ENCODE measurements at regions of chr1 and their contacts with region 1.

Region 1: GRCh38 chr1:26695356-26696118 is at the start of gene ARID1A:
- DNase-seq: peak; percentile 94 to 98 (median 98)
- ATAC-seq: peak; percentile 81
- H3K4me3 ChIP-seq: peak within 1 kb of the TSS; percentile 81
- H3K4me3 Mint-ChIP-seq: peak within 1 kb of the TSS in 9 of 10 donors; percentile 94 to 97 (median 94)
- H3K27ac ChIP-seq: peak within 1 kb of the TSS; percentile 83
- H3K27ac Mint-ChIP-seq: peak within 1 kb of the TSS; percentile 93 to 98 (median 95)
- H3K4me1 ChIP-seq: peaks cover 36 to 39% of the 10 kb centered on the region in 2 donors
- H3K4me1 Mint-ChIP-seq: peaks cover 14 to 35% (median 31%) of the 10 kb centered on the region in 7 donors
- H3K27me3 ChIP-seq: no peaks in the 10 kb centered on the region
- H3K27me3 Mint-ChIP-seq: no peaks in the 10 kb centered on the region
- total RNA-seq, gene ARID1A: 118 to 148 (median 131) TPM

Region 2: GRCh38 chr1:26254404-26254803 is 441.1 kb before region 1 on chr1:
- CTCF ChIA-PET with region 1: no interaction called
- POLR2A ChIA-PET with region 1: no interaction called
- intact Hi-C with region 1: no loop called
- DNase-seq: no peak
- ATAC-seq: no peak
- H3K4me3 ChIP-seq: no peak overlapping the region
- H3K4me3 Mint-ChIP-seq: no peak overlapping the region
- H3K27ac ChIP-seq: no peak overlapping the region
- H3K27ac Mint-ChIP-seq: no peak overlapping the region
- H3K4me1 ChIP-seq: no peaks in the 10 kb centered on the region
- H3K4me1 Mint-ChIP-seq: peaks cover 0 to 10% (median 0%) of the 10 kb centered on the region in 7 donors
- H3K27me3 ChIP-seq: no peaks in the 10 kb centered on the region
- H3K27me3 Mint-ChIP-seq: no peaks in the 10 kb centered on the region

Region 3: GRCh38 chr1:26279456-26280332 is 415.8 kb before region 1 on chr1 and contains the start of gene SH3BGRL3:
- CTCF ChIA-PET with region 1: no interaction called
- POLR2A ChIA-PET with region 1: no interaction called
- intact Hi-C with region 1: loop called in 1 of 2 experiments (anchors 10 kb)
- DNase-seq: peak; percentile 73 to 89 (median 84)
- ATAC-seq: peak; percentile 77
- H3K4me3 ChIP-seq: peak within 1 kb of the TSS; percentile 58
- H3K4me3 Mint-ChIP-seq: peak within 1 kb of the TSS; percentile 80 to 98 (median 89)
- H3K27ac ChIP-seq: peak within 1 kb of the TSS; percentile 86
- H3K27ac Mint-ChIP-seq: peak within 1 kb of the TSS; percentile 83 to 99 (median 93)
- H3K4me1 ChIP-seq: peaks cover 80 to 82% of the 10 kb centered on the region in 2 donors
- H3K4me1 Mint-ChIP-seq: peaks cover 60 to 85% (median 71%) of the 10 kb centered on the region in 7 donors
- H3K27me3 ChIP-seq: no peaks in the 10 kb centered on the region
- H3K27me3 Mint-ChIP-seq: no peaks in the 10 kb centered on the region
- total RNA-seq, gene SH3BGRL3: 156 to 636 (median 224) TPM

Region 4: GRCh38 chr1:26602378-26602959 is 93.1 kb before region 1 on chr1:
- CTCF ChIA-PET with region 1: interaction called, 14 read pairs
- POLR2A ChIA-PET with region 1: interaction called, 14 read pairs
- intact Hi-C with region 1: loop called (anchors 1 to 5 kb)
- DNase-seq: peak in 7 of 9 donors; percentile 43 to 73 (median 65)
- ATAC-seq: peak; percentile 71
- H3K4me3 ChIP-seq: no peak overlapping the region
- H3K4me3 Mint-ChIP-seq: peak overlapping the region in 1 of 10 donors; percentile 41
- H3K27ac ChIP-seq: no peak overlapping the region
- H3K27ac Mint-ChIP-seq: peak overlapping the region in 2 of 9 donors; percentile 21 to 72
- H3K4me1 ChIP-seq: peaks cover 0 to 3% of the 10 kb centered on the region in 2 donors
- H3K4me1 Mint-ChIP-seq: peaks cover 0 to 16% (median 9%) of the 10 kb centered on the region in 7 donors
- H3K27me3 ChIP-seq: no peaks in the 10 kb centered on the region
- H3K27me3 Mint-ChIP-seq: peaks cover 0 to 9% (median 0%) of the 10 kb centered on the region in 5 donors

Region 5: DNA sequence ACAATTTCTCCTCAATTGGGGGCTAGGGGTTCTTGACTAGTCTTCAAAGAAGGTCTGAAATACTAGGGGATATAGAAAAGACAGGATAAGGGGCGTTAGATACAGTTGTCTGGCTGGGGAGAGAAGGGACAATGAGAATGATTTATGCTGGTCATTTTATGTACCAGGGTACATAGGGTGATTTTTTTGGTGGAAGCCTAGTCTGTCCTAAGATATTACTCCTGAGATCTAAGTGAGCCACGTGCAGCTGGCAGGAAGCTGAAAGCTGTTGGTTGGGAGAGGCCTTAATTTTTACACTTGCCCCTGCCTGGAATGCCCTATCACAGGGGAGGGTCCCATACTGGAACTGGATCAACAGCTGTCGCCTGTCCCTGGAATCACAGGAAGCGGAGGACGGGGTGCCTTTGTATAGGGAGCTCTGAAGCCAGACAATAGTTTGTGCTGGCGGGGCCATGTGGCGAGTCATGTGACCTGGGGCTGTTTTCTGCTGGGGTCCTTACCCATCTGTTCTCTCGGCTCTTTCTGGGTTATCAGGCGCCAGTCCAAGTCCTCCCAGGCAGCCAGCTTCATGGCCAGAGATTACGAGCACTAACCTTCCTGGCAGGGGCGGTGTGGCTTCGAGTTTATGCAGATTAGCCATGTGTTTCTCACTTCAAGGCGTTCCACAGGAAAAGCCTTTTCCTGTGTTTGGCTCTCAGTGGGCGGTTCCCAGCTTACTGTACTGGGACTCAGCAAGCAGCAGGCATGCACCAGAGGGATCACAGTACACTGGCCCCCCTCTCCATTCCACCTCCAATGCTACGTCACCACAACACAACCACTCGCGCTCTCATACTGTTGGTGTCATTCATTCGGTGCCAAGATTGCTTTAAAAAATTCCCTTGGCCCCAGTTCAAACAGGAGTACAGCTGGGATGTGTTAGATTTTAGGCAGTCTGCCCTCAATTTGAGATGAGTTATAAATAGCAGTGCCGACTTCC is 27.8 kb after region 1 on chr1:
- CTCF ChIA-PET with region 1: interaction called, 5 read pairs
- POLR2A ChIA-PET with region 1: interaction called, 31 read pairs
- intact Hi-C with region 1: loop called (anchors 1 kb)
- DNase-seq: peak in 6 of 9 donors; percentile 18 to 77 (median 36)
- ATAC-seq: peak; percentile 80
- H3K4me3 ChIP-seq: peak overlapping the region; percentile 37
- H3K4me3 Mint-ChIP-seq: peak overlapping the region; percentile 64 to 89 (median 81)
- H3K27ac ChIP-seq: peak overlapping the region; percentile 58
- H3K27ac Mint-ChIP-seq: peak overlapping the region; percentile 8 to 92 (median 77)
- H3K4me1 ChIP-seq: peaks cover 77 to 81% of the 10 kb centered on the region in 2 donors
- H3K4me1 Mint-ChIP-seq: peaks cover 80 to 93% (median 89%) of the 10 kb centered on the region in 7 donors
- H3K27me3 ChIP-seq: no peaks in the 10 kb centered on the region
- H3K27me3 Mint-ChIP-seq: no peaks in the 10 kb centered on the region

Region 6: DNA sequence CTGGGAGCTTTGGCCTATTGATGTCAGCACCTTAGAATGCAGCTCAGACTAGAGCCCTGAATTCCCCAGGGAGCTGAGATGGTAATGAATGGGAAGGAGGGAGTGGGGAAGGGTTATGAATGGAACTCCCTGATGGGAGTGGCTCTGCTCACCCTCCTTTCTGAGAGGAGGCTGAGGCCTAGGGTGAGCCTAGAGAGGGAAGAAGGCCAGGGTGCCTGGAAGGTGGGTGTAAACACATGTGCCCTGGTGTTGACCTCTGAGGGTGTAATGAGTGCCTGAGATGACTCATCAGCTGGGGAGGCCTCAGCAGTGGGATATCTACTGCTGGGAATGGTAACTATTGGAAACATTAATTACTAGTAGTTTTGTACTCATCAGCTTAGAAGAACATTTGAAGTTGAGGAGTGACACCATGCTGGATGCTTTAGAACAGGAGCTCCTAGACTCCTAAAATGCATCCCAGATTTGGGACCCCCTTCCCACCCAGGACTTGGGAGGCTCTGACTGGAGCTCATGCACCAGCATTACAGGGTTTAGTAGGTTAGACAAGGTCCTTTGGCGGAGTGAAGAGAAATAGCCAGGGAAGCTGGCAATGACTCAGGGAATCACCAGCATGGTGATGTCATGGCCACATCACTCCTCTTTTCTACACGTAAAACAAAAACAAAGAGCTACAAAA is 76.2 kb after region 1 on chr1:
- CTCF ChIA-PET with region 1: no interaction called
- POLR2A ChIA-PET with region 1: interaction called, 13 read pairs
- intact Hi-C with region 1: no loop called
- DNase-seq: no peak
- ATAC-seq: peak; percentile 54
- H3K4me3 ChIP-seq: no peak overlapping the region
- H3K4me3 Mint-ChIP-seq: no peak overlapping the region
- H3K27ac ChIP-seq: peak overlapping the region; percentile 25
- H3K27ac Mint-ChIP-seq: peak overlapping the region in 8 of 9 donors; percentile 55 to 78 (median 68)
- H3K4me1 ChIP-seq: no peaks in the 10 kb centered on the region
- H3K4me1 Mint-ChIP-seq: peaks cover 0 to 42% (median 7%) of the 10 kb centered on the region in 7 donors
- H3K27me3 ChIP-seq: no peaks in the 10 kb centered on the region
- H3K27me3 Mint-ChIP-seq: no peaks in the 10 kb centered on the region

Region 7: DNA sequence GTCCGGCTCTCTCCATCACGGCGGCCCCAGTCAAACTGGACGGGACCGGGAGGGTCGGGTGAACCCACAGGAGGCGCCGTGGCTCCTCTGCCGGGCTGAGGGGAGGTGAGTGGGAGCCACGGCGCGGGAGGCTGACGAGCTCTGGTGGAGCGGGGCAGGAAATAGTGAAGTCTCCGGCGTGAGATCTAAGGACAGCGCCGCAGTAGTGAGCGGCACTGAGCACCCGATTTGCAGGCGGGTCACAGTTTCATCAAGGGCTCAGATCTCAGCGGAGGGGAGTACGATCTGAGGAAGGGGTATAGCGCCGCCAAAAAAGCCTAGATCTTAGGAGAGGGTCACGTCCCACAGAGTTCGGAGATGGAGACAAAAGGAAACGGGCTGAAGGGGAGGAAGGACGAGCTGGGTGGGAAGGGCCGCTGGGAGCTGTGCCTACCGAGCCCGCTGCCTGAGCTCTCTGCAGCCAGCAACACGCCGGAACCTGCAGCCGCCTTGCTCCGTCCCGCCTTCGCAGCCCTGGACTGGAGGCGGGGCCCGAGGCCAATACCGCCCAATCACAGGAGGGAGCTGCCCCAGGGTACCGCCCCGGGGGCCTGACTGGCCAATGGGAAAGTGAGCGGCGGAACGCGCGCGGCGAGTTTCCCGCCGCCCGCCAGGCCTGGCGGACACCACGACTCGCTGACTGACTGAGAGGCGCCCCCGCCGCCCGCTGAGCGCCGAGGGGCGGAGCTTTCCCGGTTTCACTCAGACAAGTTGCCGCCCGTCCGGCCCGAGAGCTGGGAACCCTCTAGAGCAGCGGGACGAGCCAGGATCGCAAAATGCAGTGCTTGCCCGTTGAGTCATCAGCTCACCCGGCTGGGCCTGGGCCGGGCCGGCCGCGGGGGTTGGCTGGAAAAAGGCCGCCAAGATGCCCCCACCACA is 169.3 kb after region 1 on chr1:
- CTCF ChIA-PET with region 1: no interaction called
- POLR2A ChIA-PET with region 1: interaction called, 3 read pairs
- intact Hi-C with region 1: loop called (anchors 1 to 5 kb)
- DNase-seq: peak; percentile 88 to 96 (median 91)
- ATAC-seq: peak; percentile 98
- H3K4me3 ChIP-seq: peak overlapping the region; percentile 97
- H3K4me3 Mint-ChIP-seq: peak overlapping the region; percentile 86 to 100 (median 96)
- H3K27ac ChIP-seq: peak overlapping the region; percentile 78
- H3K27ac Mint-ChIP-seq: peak overlapping the region; percentile 65 to 96 (median 93)
- H3K4me1 ChIP-seq: peaks cover 5 to 10% of the 10 kb centered on the region in 2 donors
- H3K4me1 Mint-ChIP-seq: peaks cover 10 to 33% (median 24%) of the 10 kb centered on the region in 7 donors
- H3K27me3 ChIP-seq: no peaks in the 10 kb centered on the region
- H3K27me3 Mint-ChIP-seq: no peaks in the 10 kb centered on the region

Measured in naive thymus-derived CD4-positive, alpha-beta T cell (primary cell).